Activated CD4-positive, alpha-beta T cell treated with anti-CD3 and anti-CD28 coated beads, Interleukin-2, amount 10 ng/mL, durations not matched to agents 7 days and 5 days (primary cell): ENCODE measurements at regions of chr5 and their contacts with region 1.

Region 1: DNA sequence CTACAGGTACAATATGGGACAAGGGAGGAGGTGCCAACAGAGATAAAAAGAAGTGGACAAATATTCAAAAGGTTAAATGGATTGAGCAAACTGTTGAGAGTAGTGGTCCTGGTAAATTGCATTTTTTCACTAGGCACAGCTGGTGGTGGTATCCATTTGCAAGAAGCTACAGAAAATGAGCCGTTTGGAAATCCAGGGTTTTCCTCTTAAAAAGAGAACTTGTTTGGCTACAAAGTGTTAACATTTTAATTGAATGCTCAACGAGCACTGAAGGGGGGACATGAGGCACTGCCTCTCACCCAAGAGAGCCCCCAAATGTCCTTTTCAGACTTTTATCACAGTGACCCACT is 491 bp upstream of the ZCCHC9 start:
- DNase-seq: no peak
- H3K4me3 Mint-ChIP-seq: peak overlapping the region; percentile 92
- H3K27ac Mint-ChIP-seq: peak overlapping the region; percentile 97
- H3K4me1 Mint-ChIP-seq: peaks cover 44% of the 10 kb centered on the region
- H3K27me3 Mint-ChIP-seq: no peaks in the 10 kb centered on the region

Region 2: GRCh38 chr5:81315336-81315735 is 14.4 kb after region 1 on chr5:
- CTCF ChIA-PET with region 1: interaction called, 10 read pairs
- POLR2A ChIA-PET with region 1: no interaction called
- DNase-seq: no peak
- H3K4me3 Mint-ChIP-seq: no peak overlapping the region
- H3K27ac Mint-ChIP-seq: no peak overlapping the region
- H3K4me1 Mint-ChIP-seq: no peaks in the 10 kb centered on the region
- H3K27me3 Mint-ChIP-seq: no peaks in the 10 kb centered on the region

Region 3: DNA sequence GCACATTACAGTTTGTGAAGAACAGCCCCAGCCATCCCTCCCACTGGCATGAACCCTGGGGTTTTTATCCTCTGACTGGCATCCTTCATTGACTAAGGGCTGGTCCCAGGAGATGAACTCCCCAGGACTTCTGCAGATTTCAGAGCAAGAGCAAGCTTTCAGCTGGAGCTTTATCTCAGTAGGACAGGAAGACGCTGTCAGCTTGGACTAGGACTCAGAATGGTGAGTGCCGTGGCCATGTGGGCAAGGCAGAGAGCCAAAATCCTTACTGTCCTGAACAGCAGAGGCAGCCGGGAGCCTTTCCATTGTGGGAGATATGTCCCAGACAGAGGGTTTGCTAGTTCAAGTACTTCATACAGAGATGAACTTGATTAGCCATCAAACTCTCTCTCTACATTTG is 96.3 kb after region 1 on chr5:
- CTCF ChIA-PET with region 1: no interaction called
- POLR2A ChIA-PET with region 1: no interaction called
- DNase-seq: no peak
- H3K4me3 Mint-ChIP-seq: no peak overlapping the region
- H3K27ac Mint-ChIP-seq: no peak overlapping the region
- H3K4me1 Mint-ChIP-seq: no peaks in the 10 kb centered on the region
- H3K27me3 Mint-ChIP-seq: peaks cover 46% of the 10 kb centered on the region